ENCODE measurements at regions of chr18 and their contacts with region 1.

Region 1: GRCh38 chr18:76492669-76493212 is 2.3 kb downstream of the ZNF516 start:
- DNase-seq: peak; percentile 96 to 97
- H3K4me3 ChIP-seq: peak overlapping the region; percentile 63
- H3K4me3 Mint-ChIP-seq: peak overlapping the region; percentile 78
- H3K27ac Mint-ChIP-seq: peak overlapping the region; percentile 65
- H3K4me1 ChIP-seq: no peaks in the 10 kb centered on the region
- H3K4me1 Mint-ChIP-seq: no peaks in the 10 kb centered on the region
- H3K27me3 ChIP-seq: no peaks in the 10 kb centered on the region
- H3K27me3 Mint-ChIP-seq: no peaks in the 10 kb centered on the region
- CTCF ChIP-seq: no peak

Region 2: GRCh38 chr18:76445275-76445674 is 47.5 kb before region 1 on chr18:
- CTCF ChIA-PET with region 1: no interaction called
- POLR2A ChIA-PET with region 1: no interaction called
- intact Hi-C with region 1: no loop called
- DNase-seq: no peak
- H3K4me3 ChIP-seq: no peak overlapping the region
- H3K4me3 Mint-ChIP-seq: no peak overlapping the region
- H3K27ac Mint-ChIP-seq: no peak overlapping the region
- H3K4me1 ChIP-seq: no peaks in the 10 kb centered on the region
- H3K4me1 Mint-ChIP-seq: no peaks in the 10 kb centered on the region
- H3K27me3 ChIP-seq: no peaks in the 10 kb centered on the region
- H3K27me3 Mint-ChIP-seq: no peaks in the 10 kb centered on the region
- CTCF ChIP-seq: no peak

Region 3: DNA sequence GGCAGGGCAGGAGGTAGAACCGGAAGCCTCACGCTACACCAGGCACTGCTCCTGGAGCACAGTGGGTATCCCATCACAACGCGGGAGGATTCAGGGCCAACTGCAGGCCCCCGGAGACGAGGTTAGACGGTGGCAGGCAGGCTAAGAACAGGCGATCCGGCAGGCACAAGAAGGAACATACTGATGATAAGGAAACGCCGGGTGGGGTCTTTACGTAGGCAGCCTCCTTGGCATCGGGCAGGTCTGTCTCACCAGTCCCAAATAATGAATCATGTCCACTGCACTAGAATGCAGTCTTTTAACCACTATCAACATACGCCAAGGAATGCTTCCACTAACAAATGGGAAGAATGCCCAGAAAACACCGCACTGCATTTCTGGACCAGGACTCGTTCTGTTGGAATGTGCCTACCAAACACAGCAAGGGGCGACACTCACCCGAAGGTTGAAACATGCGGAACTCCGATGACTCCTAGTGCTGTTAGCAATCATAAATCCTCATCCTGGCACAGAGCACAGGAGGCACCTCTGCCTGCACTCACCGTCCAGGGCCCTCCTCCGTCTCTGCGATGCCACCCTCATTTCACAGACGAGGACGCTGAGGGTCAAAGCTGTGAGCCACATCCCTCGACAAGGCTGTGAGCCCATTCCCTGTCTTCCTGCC is 32.9 kb before region 1 on chr18:
- CTCF ChIA-PET with region 1: no interaction called
- POLR2A ChIA-PET with region 1: no interaction called
- intact Hi-C with region 1: no loop called
- DNase-seq: no peak
- H3K4me3 ChIP-seq: no peak overlapping the region
- H3K4me3 Mint-ChIP-seq: no peak overlapping the region
- H3K27ac Mint-ChIP-seq: no peak overlapping the region
- H3K4me1 ChIP-seq: no peaks in the 10 kb centered on the region
- H3K4me1 Mint-ChIP-seq: no peaks in the 10 kb centered on the region
- H3K27me3 ChIP-seq: no peaks in the 10 kb centered on the region
- H3K27me3 Mint-ChIP-seq: no peaks in the 10 kb centered on the region
- CTCF ChIP-seq: no peak

Region 4: DNA sequence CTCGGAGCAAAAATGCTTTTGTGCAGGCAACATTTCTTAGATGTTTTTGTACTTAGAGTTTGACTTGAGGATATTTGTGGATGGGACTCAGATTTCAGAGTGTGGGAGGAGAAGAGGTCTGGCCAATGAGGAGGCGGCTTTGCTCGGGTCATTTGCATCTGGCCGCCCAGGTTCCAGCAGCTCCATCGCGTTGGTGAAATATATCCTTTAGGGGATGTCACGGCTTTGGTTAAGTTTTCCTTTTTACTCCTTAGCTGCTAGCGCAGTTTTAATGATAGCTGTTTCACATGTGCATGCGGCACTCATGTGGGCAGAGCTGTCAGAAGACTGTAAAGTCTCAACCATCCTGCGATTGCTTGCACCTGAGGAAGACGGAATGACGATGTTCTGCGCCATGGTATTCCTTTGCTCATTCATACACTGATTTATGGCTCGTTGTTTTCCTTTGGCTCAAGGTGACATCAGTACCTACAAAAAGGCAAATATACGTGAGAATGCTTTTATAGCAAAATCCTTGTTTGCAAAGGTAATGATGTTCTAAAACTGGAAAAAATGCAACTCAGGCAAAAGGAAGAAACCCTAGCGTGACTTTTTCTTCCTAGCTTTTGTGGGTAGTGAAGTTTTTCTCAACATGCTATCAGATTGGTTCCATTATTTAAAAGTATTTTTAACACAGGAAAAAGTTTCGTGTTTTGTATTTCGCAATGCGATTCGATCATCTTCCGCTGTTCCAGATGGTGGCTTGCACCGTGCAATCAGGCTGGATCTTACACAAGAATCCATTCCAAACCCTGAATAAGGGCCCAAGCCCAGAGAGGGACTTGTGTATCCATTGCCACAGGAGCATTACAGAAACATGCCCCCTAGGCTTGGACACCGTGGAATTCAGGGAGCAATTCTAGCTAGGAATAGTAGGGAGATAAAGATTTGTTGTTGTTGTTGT is 72.8 kb after region 1 on chr18:
- CTCF ChIA-PET with region 1: no interaction called
- POLR2A ChIA-PET with region 1: no interaction called
- intact Hi-C with region 1: loop called (anchors 2 kb)
- DNase-seq: peak; percentile 65 to 69
- H3K4me3 ChIP-seq: 0 out of 2 replicates have a peak overlapping the region, but pooled peaks have one; percentile 7
- H3K4me3 Mint-ChIP-seq: peak overlapping the region; percentile 61
- H3K27ac Mint-ChIP-seq: peak overlapping the region; percentile 55
- H3K4me1 ChIP-seq: peaks cover 6% of the 10 kb centered on the region; the same call in 1 of the 2 replicates
- H3K4me1 Mint-ChIP-seq: peaks cover 7% of the 10 kb centered on the region
- H3K27me3 ChIP-seq: no peaks in the 10 kb centered on the region
- H3K27me3 Mint-ChIP-seq: no peaks in the 10 kb centered on the region
- CTCF ChIP-seq: no peak

Region 5: DNA sequence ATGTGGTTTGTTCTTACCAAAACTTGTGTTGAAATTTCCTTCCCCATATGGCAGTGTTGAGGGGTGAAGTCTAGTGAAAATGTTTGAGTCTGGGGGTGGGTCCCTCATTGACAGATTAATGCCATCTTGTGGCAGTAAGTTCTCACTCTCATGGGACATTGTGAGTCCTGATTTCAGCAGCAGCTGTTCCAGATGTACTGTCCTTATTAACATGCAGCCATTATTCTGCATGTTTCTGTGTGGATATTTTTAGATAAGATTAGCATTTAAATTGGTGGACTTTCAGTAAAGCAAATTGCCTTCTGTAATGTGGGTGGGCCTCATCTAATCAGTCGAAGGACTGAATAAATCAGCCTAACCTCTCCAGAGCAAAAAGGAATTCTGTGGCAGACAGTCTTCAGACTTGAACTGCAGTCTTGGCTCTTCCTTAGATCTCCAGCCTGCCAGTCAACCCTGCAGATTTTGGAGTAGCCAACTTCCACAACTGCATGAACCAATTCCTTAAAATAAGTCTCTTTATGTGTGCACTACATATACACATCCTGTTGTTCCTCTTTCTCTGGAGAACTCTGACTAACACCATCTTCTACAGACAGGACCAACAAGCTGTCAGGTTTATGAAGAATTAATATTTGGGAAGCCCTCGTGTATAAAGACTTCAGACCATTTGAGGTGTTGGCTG is 141.0 kb after region 1 on chr18:
- CTCF ChIA-PET with region 1: no interaction called
- POLR2A ChIA-PET with region 1: no interaction called
- intact Hi-C with region 1: no loop called
- DNase-seq: no peak
- H3K4me3 ChIP-seq: no peak overlapping the region
- H3K4me3 Mint-ChIP-seq: no peak overlapping the region
- H3K27ac Mint-ChIP-seq: no peak overlapping the region
- H3K4me1 ChIP-seq: no peaks in the 10 kb centered on the region
- H3K4me1 Mint-ChIP-seq: no peaks in the 10 kb centered on the region
- H3K27me3 ChIP-seq: no peaks in the 10 kb centered on the region
- H3K27me3 Mint-ChIP-seq: no peaks in the 10 kb centered on the region
- CTCF ChIP-seq: no peak

Measured in Caco-2 (cell line).